ENCODE measurements at regions of chr5 and their contacts with region 1.

Region 1: DNA sequence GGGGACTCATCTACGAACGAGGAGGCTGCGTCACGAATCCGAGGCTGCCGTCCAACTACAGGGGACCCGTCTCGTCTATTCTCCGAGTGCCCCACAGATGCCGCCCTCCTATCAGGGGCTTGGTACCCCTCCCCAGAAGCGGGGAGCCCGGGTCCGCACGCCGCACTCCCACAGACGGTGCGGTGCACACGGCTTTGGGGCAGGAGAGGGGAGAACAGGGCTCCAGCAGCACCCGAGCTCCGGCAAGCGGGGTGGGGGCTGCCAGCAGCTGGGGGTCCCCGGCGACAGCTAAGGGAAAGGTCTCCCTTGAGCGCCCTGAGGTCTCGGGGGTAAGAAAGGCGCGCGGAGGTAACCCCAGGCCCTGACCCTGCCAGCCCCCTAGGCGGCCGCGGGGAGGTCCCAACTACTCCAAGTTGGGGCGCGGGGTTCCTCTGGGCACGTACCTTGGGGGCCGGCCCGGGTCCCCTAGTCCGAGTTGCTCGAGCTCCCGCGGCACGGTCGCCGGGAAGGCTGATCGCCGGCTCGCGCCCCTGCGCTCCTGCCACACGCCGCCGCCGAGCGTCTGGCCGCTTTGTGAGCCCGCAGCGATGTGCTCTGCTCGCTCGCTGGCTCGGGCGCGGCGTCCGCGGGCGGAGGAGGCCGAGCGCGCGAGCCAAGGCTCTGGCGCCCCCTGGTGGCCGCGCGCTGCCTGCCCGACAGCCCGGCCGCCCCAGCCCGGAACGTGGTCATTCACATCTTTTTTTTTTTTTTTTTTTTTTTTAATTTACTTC is at the start of gene SPOCK1:
- DNase-seq: peak; percentile 65
- H3K4me3 ChIP-seq: peak within 1 kb of the TSS; percentile 20 to 55 (median 36)
- H3K27ac ChIP-seq: peak within 1 kb of the TSS in 2 of 4 donors; percentile 11 to 39
- H3K4me1 ChIP-seq: peaks cover 0 to 6% (median 3%) of the 10 kb centered on the region in 4 donors
- H3K27me3 ChIP-seq: peaks cover 33% of the 10 kb centered on the region
- CTCF ChIP-seq: peak in 4 of 5 experiments; percentile 43 to 83 (median 66)
- EP300 ChIP-seq: no peak
- POLR2A ChIP-seq: no peak
- total RNA-seq, gene SPOCK1: 8.6 to 34.8 (median 13.2) TPM

Region 2: DNA sequence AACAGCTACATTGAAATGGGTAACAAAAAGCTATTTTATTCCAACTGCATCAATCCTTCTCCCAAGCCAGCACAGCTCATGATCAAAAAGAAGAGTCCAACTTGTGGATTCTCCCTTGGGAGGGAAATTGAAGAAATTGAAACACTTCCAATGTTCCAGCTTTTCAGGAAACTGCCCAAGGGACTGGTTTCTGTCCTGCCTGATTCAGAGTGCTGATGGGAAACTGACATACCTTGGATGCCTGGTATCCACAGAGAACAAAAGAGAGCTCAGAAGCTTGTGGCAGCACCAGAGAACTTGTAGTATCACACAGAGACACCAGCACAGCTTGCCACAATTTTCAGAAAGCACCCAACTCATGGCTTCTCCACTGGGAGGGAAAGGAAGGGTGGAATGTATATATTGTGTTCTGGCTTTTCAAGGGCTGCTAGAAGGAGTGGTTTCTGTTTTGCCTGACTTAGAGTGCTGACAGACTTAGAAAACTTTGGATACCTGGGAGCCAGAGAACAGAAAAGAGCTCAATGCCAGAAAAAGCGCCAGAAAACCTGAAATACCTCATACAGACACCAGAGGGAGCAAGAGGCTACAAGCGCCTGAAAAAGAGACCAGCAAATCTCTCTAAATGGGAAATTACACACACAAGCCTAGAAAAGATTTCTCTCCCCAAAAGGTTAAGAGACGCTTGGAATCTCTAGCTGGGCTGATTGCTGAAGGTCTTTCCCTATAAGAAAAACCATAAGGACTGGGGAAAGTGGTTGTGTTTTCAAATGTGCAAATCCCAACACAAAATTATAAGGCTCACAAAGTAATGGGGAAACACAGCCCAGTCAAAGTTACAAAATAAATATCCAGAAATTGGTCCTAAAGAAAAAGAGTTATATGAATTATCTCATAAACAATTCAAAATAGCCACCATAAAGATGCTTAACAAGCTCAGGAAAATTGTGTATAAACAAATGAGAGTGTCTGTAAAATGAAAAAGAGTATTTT is 178.6 kb before region 1 on chr5:
- in situ Hi-C with region 1: loop called in 1 of 4 experiments (anchors 10 kb)
- intact Hi-C with region 1: loop called (anchors 5 kb)
- DNase-seq: no peak
- H3K4me3 ChIP-seq: no peak overlapping the region
- H3K27ac ChIP-seq: no peak overlapping the region
- H3K4me1 ChIP-seq: peaks cover 0 to 3% (median 0%) of the 10 kb centered on the region in 4 donors
- H3K27me3 ChIP-seq: peaks cover 17% of the 10 kb centered on the region
- CTCF ChIP-seq: peak; percentile 70 to 80 (median 78)
- EP300 ChIP-seq: no peak
- POLR2A ChIP-seq: no peak

Region 3: GRCh38 chr5:137344723-137345322 is 154.1 kb before region 1 on chr5:
- in situ Hi-C with region 1: no loop called
- intact Hi-C with region 1: loop called (anchors 10 kb)
- DNase-seq: peak; percentile 33
- H3K4me3 ChIP-seq: no peak overlapping the region
- H3K27ac ChIP-seq: no peak overlapping the region
- H3K4me1 ChIP-seq: no peaks in the 10 kb centered on the region
- H3K27me3 ChIP-seq: no peaks in the 10 kb centered on the region
- CTCF ChIP-seq: peak; percentile 73 to 82 (median 74)
- EP300 ChIP-seq: no peak
- POLR2A ChIP-seq: no peak

Region 4: GRCh38 chr5:137933491-137933911 is 434.6 kb after region 1 on chr5:
- in situ Hi-C with region 1: no loop called
- intact Hi-C with region 1: no loop called
- DNase-seq: no peak
- H3K4me3 ChIP-seq: no peak overlapping the region
- H3K27ac ChIP-seq: peak overlapping the region in 2 of 4 donors; percentile 10 to 27
- H3K4me1 ChIP-seq: peaks cover 0 to 19% (median 9%) of the 10 kb centered on the region in 4 donors
- H3K27me3 ChIP-seq: no peaks in the 10 kb centered on the region
- CTCF ChIP-seq: no peak
- EP300 ChIP-seq: no peak
- POLR2A ChIP-seq: no peak

Measured in transverse colon (tissue), 4 donors.